HEK293 (cell line): ENCODE measurements at regions of chrX and their contacts with region 1.

Region 1: GRCh38 chrX:140762061-140762460 is 52.5 kb downstream of the LINC00632 start:
- H3K4me3 ChIP-seq: no peak overlapping the region
- H3K27ac ChIP-seq: no peak overlapping the region
- H3K4me1 ChIP-seq: no peaks in the 10 kb centered on the region
- CTCF ChIP-seq: peak; percentile 78

Region 2: DNA sequence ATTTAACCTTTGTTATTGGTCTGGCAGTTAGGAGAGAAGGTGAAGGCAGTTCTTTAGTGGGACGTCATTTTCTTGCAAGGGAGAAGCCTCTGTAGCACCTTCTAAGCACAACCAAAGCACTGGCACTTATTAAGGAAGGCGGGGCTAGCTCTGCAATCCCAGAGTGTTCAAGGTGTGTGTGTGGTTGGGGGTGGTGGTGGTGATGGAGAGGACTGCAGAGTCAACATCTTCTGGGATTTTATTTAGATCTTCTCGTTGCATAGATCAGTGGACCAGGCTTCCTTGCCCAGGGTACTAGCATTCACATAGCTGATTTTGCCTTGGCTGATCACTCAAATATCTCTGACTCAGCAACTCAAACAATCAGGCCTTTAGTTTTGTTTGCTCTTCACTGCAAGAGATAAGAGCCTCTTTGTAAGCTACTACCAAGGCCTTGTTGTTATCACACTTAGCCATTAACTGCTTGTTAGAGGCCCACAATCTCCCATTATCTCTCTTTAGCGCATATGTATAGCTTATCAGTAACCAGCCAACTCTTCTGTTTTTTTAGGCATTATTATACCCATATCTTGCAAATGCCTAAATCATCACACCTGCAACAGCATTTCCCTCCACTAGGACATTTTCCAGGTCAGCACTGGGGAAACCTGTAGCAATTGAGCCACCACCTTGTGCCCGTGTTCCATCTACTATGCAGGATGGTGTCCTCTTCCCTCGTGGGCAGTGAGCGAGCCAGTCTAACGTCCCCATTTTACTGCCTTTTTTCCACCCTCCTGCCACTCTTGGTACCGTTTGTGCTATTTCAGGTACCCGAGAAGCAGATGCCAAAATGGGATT is 88.9 kb before region 1 on chrX:
- CTCF ChIA-PET with region 1: no interaction called
- POLR2A ChIA-PET with region 1: no interaction called
- H3K4me3 ChIP-seq: no peak overlapping the region
- H3K27ac ChIP-seq: no peak overlapping the region
- H3K4me1 ChIP-seq: peaks cover 5% of the 10 kb centered on the region
- CTCF ChIP-seq: no peak

Region 3: DNA sequence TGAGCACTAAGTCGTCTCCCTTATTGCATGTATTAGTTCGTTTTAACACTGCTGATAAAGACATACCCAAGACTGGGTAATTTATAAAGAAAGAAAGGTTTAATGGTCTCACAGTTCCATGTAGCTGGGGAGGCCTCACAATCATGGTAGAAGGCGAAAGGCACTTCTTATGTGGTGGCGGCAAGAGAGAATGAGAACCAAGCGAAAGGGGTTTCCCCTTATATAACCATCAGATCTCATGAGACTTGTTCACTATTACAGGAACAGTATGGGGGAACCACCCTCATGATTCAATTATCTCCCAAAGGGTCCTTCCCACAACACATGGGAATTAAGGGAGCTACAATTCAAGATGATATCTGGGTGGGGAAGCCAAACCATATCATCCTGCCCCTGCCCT is 32.6 kb after region 1 on chrX:
- CTCF ChIA-PET with region 1: interaction called, 14 read pairs
- POLR2A ChIA-PET with region 1: no interaction called
- H3K4me3 ChIP-seq: no peak overlapping the region
- H3K27ac ChIP-seq: no peak overlapping the region
- H3K4me1 ChIP-seq: no peaks in the 10 kb centered on the region
- CTCF ChIP-seq: no peak

Region 4: GRCh38 chrX:140817942-140818341 is 55.9 kb after region 1 on chrX:
- CTCF ChIA-PET with region 1: interaction called, 10 read pairs
- POLR2A ChIA-PET with region 1: no interaction called
- H3K4me3 ChIP-seq: no peak overlapping the region
- H3K27ac ChIP-seq: no peak overlapping the region
- H3K4me1 ChIP-seq: no peaks in the 10 kb centered on the region
- CTCF ChIP-seq: no peak

Region 5: DNA sequence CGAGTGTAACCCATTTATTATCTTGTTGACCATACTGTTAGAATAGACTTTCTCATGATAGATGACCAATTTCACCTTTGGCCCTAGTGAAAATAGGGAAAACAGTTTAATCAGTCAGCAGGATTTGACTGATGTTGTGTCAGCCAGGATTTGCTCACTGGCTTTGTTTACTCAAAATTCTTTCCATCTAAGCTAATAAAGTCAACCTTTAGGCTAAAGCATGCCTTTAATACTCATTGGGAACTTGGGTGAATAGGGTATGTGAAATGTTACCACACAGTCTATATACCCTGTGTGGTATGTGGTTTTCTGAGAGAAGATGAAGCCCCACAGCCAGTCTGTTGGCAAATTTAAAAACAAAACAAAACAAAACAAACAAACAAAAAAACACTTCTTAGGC is 221.7 kb after region 1 on chrX:
- CTCF ChIA-PET with region 1: no interaction called
- POLR2A ChIA-PET with region 1: no interaction called
- H3K4me3 ChIP-seq: no peak overlapping the region
- H3K27ac ChIP-seq: no peak overlapping the region
- H3K4me1 ChIP-seq: no peaks in the 10 kb centered on the region
- CTCF ChIP-seq: no peak

Region 6: DNA sequence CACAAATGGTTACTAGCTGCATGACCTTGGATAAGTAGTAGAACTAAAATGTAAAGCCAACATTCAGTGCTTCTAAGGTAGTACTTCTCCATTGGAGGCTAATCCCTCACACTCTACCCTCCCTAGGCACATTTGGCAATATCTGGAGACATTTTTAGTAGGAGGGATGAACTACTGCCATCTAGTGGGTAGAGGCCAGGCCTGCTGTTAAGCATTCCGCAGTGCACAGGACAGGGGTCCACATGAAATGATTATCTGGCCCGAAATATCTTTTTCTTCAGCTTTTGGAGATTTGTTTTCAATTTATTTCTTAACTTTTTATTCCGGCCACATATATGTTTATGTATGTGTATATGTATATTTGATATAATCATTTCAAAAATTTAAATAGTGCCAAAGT is 516.2 kb after region 1 on chrX:
- CTCF ChIA-PET with region 1: interaction called, 28 read pairs
- POLR2A ChIA-PET with region 1: no interaction called
- H3K4me3 ChIP-seq: no peak overlapping the region
- H3K27ac ChIP-seq: no peak overlapping the region
- H3K4me1 ChIP-seq: no peaks in the 10 kb centered on the region
- CTCF ChIP-seq: no peak